Left ventricle myocardium inferior (tissue), 1 donor: ENCODE measurements at regions of chr13 and their contacts with region 1.

Region 1: GRCh38 chr13:94617389-94618000 is 15.8 kb downstream of the GPR180 start:
- DNase-seq: no peak
- H3K4me3 ChIP-seq: no peak overlapping the region
- H3K27ac ChIP-seq: no peak overlapping the region
- H3K4me1 ChIP-seq: no peaks in the 10 kb centered on the region
- H3K27me3 ChIP-seq: no peaks in the 10 kb centered on the region
- CTCF ChIP-seq: peak; percentile 75

Region 2: GRCh38 chr13:94435604-94436226 is 181.8 kb before region 1 on chr13:
- intact Hi-C with region 1: loop called (anchors 5 kb)
- DNase-seq: no peak
- H3K4me3 ChIP-seq: no peak overlapping the region
- H3K27ac ChIP-seq: no peak overlapping the region
- H3K4me1 ChIP-seq: peaks cover 6% of the 10 kb centered on the region
- H3K27me3 ChIP-seq: no peaks in the 10 kb centered on the region
- CTCF ChIP-seq: peak; percentile 71